ENCODE measurements at regions of chr10 and their contacts with region 1.

Region 1: DNA sequence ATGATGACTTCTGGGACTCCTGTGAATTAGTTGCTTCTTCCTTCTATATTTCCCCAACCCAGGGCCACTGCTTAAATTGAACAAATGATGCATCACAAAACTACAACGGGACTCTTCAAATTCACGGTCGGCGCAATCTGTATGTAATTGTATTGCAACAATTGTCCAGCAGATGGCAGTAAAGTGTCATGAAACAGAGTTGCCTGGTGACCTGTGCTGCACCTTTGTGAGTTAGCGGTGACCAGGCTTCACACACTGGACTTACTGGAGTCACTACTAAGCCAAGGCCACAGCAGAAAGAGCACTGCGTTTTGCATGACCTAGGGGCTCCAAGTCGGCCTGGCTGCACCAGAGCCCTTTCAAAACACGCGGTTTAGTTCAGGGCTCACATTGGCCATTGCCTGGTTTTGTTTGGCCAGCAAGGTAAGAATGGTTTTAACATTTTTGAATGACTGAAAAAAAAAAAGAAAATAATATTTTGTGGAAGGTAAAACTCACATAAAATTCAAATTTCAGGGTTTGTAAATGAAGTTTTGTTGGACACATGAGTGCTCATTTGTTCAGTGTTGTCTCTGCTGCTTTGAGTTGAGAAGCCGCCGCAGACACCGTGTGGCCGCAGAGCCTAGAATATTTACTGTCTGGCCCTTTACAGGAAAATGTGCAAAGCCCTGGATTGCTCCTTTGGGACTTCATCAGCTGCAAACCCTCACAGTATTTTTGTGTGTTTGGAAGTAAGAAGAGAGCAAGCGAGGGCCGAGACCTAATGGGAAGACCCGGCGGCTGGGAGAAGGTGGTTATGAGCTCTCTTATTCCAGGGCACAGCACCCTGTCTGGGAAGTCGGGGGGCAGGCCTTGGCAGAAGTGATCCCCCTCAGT is 23.2 kb upstream of the ZNF32 start:
- DNase-seq: peak in 1 of 2 donors; percentile 69
- ATAC-seq: peak; percentile 58 to 78 (median 70)
- H3K4me3 ChIP-seq: no peak overlapping the region
- H3K27ac ChIP-seq: peak overlapping the region in 1 of 10 donors; percentile 38
- H3K4me1 ChIP-seq: peaks cover 0 to 37% (median 8%) of the 10 kb centered on the region in 9 donors
- H3K27me3 ChIP-seq: peaks cover 0 to 32% (median 16%) of the 10 kb centered on the region in 7 donors
- CTCF ChIP-seq: peak; percentile 64 to 89 (median 79)

Region 2: GRCh38 chr10:44030143-44030542 is 358.2 kb after region 1 on chr10:
- intact Hi-C with region 1: loop called in 1 of 10 experiments (anchors 10 kb)
- DNase-seq: no peak
- ATAC-seq: peak in 2 of 8 donors; percentile 11 to 47
- H3K4me3 ChIP-seq: no peak overlapping the region
- H3K27ac ChIP-seq: peak overlapping the region in 1 of 10 donors; percentile 45
- H3K4me1 ChIP-seq: peaks cover 0 to 13% (median 0%) of the 10 kb centered on the region in 9 donors
- H3K27me3 ChIP-seq: no peaks in the 10 kb centered on the region
- CTCF ChIP-seq: peak in 6 of 9 donors; percentile 18 to 46 (median 32)

Region 3: DNA sequence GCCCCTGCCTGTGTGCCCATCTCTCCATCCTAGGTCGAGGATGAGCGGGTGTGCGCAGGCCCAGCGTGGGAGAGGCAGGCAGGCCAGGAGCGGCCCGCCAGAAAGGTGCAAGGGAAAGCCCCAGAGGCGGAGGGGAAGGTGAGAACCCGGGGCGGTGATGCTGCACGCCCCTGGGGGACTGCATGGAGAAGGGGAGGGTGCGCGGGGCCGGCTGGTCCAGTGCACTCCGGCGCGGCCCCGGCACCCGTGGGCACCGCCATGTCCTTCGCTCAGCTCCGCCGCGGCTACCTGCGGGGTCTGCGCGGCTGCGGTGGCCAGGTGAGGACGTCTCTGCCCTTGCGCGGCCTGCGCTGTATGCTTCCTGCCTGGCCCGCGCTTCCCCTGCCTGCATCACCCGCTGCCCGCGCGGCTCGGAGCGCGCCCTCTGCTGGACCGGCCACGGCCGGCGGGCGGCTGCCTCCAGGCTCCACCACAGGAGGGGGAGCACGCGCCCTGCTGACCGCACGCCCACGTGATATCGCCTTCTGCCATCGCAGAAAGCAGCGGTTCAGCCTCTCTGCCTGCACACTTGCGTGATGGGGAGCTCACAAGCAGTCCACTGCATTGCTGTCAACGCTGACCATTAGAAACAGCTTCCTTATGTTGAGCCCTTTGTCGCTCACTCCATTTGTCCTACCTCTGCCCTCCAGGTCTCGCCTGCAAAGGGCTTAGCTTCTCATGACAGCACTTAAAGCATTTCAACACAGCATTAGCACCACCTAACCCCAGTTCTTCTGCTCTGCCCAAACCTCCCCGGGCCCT is 639.1 kb after region 1 on chr10:
- intact Hi-C with region 1: loop called in 4 of 10 experiments (anchors 5 kb)
- DNase-seq: peak; percentile 87 to 91
- ATAC-seq: peak; percentile 95 to 99 (median 98)
- H3K4me3 ChIP-seq: peak overlapping the region in 9 of 10 donors; percentile 26 to 55 (median 48)
- H3K27ac ChIP-seq: peak overlapping the region in 5 of 10 donors; percentile 46 to 72 (median 65)
- H3K4me1 ChIP-seq: peaks cover 4 to 14% (median 10%) of the 10 kb centered on the region in 9 donors
- H3K27me3 ChIP-seq: no peaks in the 10 kb centered on the region
- CTCF ChIP-seq: peak; percentile 90 to 100 (median 98)

Region 4: GRCh38 chr10:44517635-44518034 is 845.7 kb after region 1 on chr10:
- intact Hi-C with region 1: loop called in 1 of 10 experiments (anchors 5 kb)
- DNase-seq: no peak
- ATAC-seq: no peak
- H3K4me3 ChIP-seq: no peak overlapping the region
- H3K27ac ChIP-seq: no peak overlapping the region
- H3K4me1 ChIP-seq: peaks cover 0 to 9% (median 0%) of the 10 kb centered on the region in 9 donors
- H3K27me3 ChIP-seq: no peaks in the 10 kb centered on the region
- CTCF ChIP-seq: peak in 4 of 9 donors; percentile 15 to 29 (median 24)

Region 5: GRCh38 chr10:44857363-44858016 is 1185.6 kb after region 1 on chr10:
- intact Hi-C with region 1: loop called in 6 of 10 experiments (anchors 2 to 5 kb)
- DNase-seq: peak; percentile 78 to 79
- ATAC-seq: peak; percentile 73 to 91 (median 86)
- H3K4me3 ChIP-seq: no peak overlapping the region
- H3K27ac ChIP-seq: peak overlapping the region in 1 of 10 donors; percentile 3
- H3K4me1 ChIP-seq: peaks cover 0 to 28% (median 0%) of the 10 kb centered on the region in 9 donors
- H3K27me3 ChIP-seq: peaks cover 0 to 8% (median 0%) of the 10 kb centered on the region in 7 donors
- CTCF ChIP-seq: peak; percentile 95 to 100 (median 98)

Region 6: DNA sequence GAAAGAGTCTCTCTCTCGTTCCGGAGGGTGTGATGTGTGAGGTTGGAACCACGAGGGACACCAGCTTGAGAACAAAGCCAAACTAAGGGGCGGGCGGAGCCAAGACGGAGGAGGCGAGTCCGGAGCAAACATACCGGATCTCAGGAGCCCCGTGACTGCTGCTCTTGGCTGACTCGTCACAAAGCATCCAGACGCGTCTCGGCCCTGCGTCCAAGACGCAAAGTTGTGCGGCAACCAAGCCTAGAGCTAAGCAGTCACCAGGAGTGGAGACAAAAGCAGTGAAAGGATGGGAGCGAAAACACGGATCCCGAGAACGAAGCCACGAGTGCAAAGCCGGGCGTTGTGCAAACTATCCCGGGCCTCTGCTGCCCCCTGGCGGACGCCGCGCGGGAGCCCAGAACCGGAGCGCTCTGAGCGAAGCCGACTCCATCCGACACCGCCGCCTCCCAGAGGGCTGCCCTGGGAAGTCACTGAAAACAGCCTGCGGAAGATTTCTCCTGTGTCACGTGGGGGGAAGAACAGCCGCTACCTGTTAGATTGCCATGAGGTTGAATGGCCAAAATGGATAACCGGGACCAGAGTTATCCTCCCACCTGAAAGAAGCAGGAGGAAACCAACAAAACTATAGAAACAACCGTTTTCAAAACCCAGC is 1192.9 kb after region 1 on chr10:
- intact Hi-C with region 1: loop called (anchors 2 to 5 kb)
- DNase-seq: peak; percentile 91 to 95
- ATAC-seq: peak; percentile 92 to 98 (median 97)
- H3K4me3 ChIP-seq: peak overlapping the region; percentile 29 to 60 (median 54)
- H3K27ac ChIP-seq: peak overlapping the region; percentile 0 to 72 (median 63)
- H3K4me1 ChIP-seq: peaks cover 3 to 35% (median 16%) of the 10 kb centered on the region in 9 donors
- H3K27me3 ChIP-seq: peaks cover 0 to 30% (median 7%) of the 10 kb centered on the region in 7 donors
- CTCF ChIP-seq: peak; percentile 95 to 99 (median 98)

Measured in heart right ventricle (tissue), 16 donors.